ENCODE measurements at regions of chr2 and their contacts with region 1.

Region 1: GRCh38 chr2:10434886-10435819 is 13.0 kb downstream of the ODC1 start:
- DNase-seq: peak; percentile 71 to 90 (median 90)
- ATAC-seq: peak; percentile 77 to 85
- H3K4me3 ChIP-seq: no peak overlapping the region
- H3K27ac ChIP-seq: no peak overlapping the region
- H3K4me1 ChIP-seq: no peaks in the 10 kb centered on the region
- H3K27me3 ChIP-seq: no peaks in the 10 kb centered on the region

Region 2: DNA sequence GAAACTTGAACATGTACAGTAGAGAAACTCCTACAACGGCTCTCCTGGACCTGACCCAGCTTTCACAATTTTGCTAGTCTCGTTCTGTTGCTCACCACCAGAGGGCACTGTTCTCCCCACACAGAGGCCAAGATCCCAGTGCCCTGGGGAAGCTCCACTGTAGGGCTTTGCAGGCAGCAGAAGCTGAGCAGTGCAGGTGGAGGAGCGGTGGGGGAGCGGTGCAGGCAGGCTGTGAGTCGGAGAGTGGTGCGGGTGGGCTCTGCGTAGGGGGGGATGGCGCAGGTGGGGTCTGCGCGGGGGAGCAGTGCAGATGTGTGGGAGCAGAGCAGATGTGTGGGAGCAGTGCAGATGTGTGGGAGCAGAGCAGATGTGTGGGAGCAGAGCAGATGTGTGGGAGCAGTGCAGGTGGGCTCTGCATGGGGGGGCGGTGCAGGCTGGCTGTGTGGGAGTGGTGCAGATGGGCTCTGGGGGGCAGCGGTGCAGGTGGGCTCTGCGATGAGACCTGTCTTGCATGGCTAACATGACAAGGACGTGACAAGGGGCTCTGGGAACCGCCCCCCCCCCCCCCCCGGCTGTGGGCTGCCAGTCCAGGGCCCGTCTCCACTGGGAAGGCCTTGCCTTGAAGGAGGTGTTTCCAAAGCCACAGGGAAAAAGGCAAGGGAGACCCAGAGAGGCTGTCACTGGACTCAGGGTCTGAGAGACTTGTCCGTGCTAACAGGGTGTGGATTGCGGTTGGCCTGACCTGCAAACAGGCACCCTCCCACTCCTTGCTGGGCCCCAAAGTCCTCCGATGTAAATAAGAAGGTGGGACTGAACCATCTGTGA is 362.3 kb before region 1 on chr2:
- intact Hi-C with region 1: loop called in 2 of 4 experiments (anchors 5 kb)
- DNase-seq: peak; percentile 79 to 89 (median 87)
- ATAC-seq: peak; percentile 89 to 91
- H3K4me3 ChIP-seq: no peak overlapping the region
- H3K27ac ChIP-seq: no peak overlapping the region
- H3K4me1 ChIP-seq: no peaks in the 10 kb centered on the region
- H3K27me3 ChIP-seq: no peaks in the 10 kb centered on the region

Region 3: GRCh38 chr2:10079234-10079869 is 355.8 kb before region 1 on chr2:
- intact Hi-C with region 1: loop called in 2 of 4 experiments (anchors 5 kb)
- DNase-seq: peak; percentile 54 to 88 (median 77)
- ATAC-seq: peak; percentile 67 to 82
- H3K4me3 ChIP-seq: peak overlapping the region; percentile 62
- H3K27ac ChIP-seq: peak overlapping the region; percentile 65
- H3K4me1 ChIP-seq: peaks cover 3% of the 10 kb centered on the region
- H3K27me3 ChIP-seq: no peaks in the 10 kb centered on the region

Region 4: GRCh38 chr2:10122386-10123280 is 312.5 kb before region 1 on chr2 and contains the start of gene RRM2:
- intact Hi-C with region 1: loop called (anchors 2 to 5 kb)
- DNase-seq: peak; percentile 93 to 97 (median 97)
- ATAC-seq: peak; percentile 92 to 95
- H3K4me3 ChIP-seq: peak within 1 kb of the TSS; percentile 45
- H3K27ac ChIP-seq: no peak within 1 kb of the TSS
- H3K4me1 ChIP-seq: peaks cover 3% of the 10 kb centered on the region
- H3K27me3 ChIP-seq: no peaks in the 10 kb centered on the region
- total RNA-seq, gene RRM2: 0.37 to 6.1 (median 2.7) TPM

Region 5: GRCh38 chr2:10141736-10142642 is 293.2 kb before region 1 on chr2:
- intact Hi-C with region 1: loop called in 1 of 4 experiments (anchors 5 kb)
- DNase-seq: peak in 2 of 3 donors; percentile 63 to 68
- ATAC-seq: peak; percentile 42 to 62
- H3K4me3 ChIP-seq: no peak overlapping the region
- H3K27ac ChIP-seq: no peak overlapping the region
- H3K4me1 ChIP-seq: no peaks in the 10 kb centered on the region
- H3K27me3 ChIP-seq: no peaks in the 10 kb centered on the region

Region 6: GRCh38 chr2:10504994-10505820 is 70.1 kb after region 1 on chr2:
- intact Hi-C with region 1: no loop called
- DNase-seq: peak in 1 of 3 donors; percentile 37
- ATAC-seq: no peak
- H3K4me3 ChIP-seq: no peak overlapping the region
- H3K27ac ChIP-seq: no peak overlapping the region
- H3K4me1 ChIP-seq: no peaks in the 10 kb centered on the region
- H3K27me3 ChIP-seq: no peaks in the 10 kb centered on the region